Mammary epithelial cell (primary cell): ENCODE measurements at regions of chr10 and their contacts with region 1.

Region 1: DNA sequence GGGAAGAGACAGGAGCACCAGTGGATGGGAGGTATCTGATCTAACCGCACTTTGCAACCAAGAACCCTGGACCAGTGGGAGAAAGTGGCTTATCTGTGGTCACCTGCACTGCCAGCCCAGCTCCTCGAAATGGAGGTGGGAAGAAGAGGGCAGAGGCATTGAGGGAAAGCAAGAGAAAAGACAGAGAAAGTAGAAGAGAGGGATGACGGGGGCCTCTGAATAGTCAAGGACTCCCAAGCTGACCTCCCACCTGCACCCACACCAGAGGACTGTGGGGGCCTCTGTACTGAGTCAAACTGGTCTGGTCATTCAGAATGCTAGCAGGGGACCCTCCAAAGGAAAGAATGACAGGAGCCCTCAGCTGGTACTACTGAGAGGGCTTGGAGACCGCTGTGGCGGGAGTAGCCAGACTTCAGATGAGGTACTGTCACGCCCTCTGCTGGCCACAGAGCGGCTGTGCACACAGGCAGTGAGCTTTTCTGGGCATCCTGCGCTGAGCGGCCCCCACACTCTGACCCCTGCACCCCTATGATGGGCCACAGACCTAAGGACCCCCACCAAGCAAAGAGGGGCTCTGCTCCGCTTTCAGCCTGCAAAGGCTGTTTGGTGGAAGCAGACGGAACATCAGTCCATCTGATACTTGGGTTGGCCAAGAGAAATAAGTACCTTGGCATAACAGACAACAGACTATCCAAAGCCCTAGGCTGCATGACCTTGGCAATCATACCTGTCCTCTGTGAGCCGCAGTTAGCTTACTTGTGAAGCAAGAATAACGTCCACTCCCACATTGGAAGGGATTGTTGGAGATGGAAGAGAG is 112.9 kb downstream of the COL13A1 start:
- DNase-seq: peak; percentile 31
- H3K4me3 ChIP-seq: no peak overlapping the region
- H3K27ac ChIP-seq: no peak overlapping the region
- H3K4me1 ChIP-seq: no peaks in the 10 kb centered on the region
- H3K27me3 ChIP-seq: no peaks in the 10 kb centered on the region
- CTCF ChIP-seq: peak; percentile 91 to 95

Region 2: DNA sequence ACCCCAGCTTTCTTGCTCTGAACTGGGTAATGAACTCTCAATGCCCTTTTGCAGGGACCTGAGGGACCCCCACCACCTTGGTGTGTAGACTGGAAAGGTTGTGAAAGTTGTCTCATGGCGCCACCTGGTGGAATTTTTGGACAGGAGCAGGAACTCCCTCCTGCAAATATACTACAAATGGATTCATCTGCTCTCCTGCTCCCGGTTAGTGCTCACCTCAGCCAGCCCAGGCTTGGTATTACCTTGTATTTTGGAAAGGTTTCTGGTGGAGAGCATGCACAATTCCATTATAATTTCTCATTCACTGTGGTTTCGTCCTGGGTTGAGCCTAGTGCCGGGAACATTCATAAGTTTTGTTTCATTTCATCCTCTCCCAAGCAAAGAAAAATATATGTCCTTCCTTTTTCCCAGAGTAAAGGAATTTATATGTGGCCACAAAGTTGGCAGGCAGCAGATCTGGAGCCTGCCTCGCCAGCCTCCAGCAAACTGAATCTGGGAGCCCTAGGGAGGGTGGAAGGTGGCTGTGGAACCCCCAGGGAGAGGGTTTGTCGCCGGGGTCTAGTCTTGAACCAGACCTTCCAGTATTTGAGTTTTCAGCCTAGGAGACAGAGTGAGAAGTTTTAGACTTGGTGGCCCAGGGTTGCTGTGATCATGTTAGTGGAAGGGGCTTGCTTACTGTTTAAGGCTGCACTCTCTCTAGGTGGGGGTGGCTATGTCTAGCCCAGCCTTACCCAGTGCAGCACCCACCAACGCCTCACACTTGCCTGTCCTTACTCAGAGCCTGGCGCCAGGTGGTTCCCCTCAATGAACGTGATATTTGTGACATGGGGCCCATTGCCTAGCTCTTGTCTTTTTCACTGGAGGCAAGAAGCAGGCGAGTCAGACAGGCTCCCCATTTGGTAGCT is 275.1 kb before region 1 on chr10:
- CTCF ChIA-PET with region 1: no interaction called
- dilution Hi-C with region 1: loop called (anchors 5 kb)
- in situ Hi-C with region 1: no loop called
- intact Hi-C with region 1: loop called (anchors 1 kb)
- DNase-seq: peak; percentile 57
- H3K4me3 ChIP-seq: no peak overlapping the region
- H3K27ac ChIP-seq: peak overlapping the region; percentile 38
- H3K4me1 ChIP-seq: peaks cover 29% of the 10 kb centered on the region
- H3K27me3 ChIP-seq: no peaks in the 10 kb centered on the region
- CTCF ChIP-seq: peak; percentile 81 to 90

Region 3: GRCh38 chr10:69696073-69696731 is 218.4 kb before region 1 on chr10:
- CTCF ChIA-PET with region 1: no interaction called
- dilution Hi-C with region 1: no loop called
- in situ Hi-C with region 1: no loop called
- intact Hi-C with region 1: loop called (anchors 1 kb)
- DNase-seq: peak; percentile 87
- H3K4me3 ChIP-seq: no peak overlapping the region
- H3K27ac ChIP-seq: peak overlapping the region; percentile 49
- H3K4me1 ChIP-seq: no peaks in the 10 kb centered on the region
- H3K27me3 ChIP-seq: peaks cover 4% of the 10 kb centered on the region
- CTCF ChIP-seq: peak; percentile 69 to 72

Region 4: DNA sequence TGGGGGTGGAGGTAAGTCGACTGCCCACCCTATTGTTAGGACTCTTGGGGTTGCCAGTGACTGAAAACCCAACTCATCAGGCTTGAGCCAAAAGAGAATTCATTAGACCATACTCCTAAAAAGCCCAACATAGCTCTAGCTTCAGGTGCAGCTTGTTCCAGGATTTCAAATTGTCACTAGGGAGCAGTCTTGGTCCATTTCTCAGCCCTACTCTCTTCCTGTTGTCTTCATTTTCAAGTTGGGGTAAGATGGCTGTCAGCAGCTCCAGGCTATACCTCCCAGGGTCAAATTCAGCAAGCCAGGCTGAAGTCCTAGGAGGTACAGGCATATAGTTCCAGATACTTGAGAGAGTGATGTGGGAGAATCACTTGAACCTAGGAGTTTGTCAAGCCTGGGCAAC is 127.8 kb before region 1 on chr10:
- CTCF ChIA-PET with region 1: interaction called, 22 read pairs
- dilution Hi-C with region 1: loop called (anchors 5 kb)
- in situ Hi-C with region 1: loop called (anchors 10 kb)
- intact Hi-C with region 1: loop called (anchors 1 kb)
- DNase-seq: peak; percentile 35
- H3K4me3 ChIP-seq: no peak overlapping the region
- H3K27ac ChIP-seq: no peak overlapping the region
- H3K4me1 ChIP-seq: no peaks in the 10 kb centered on the region
- H3K27me3 ChIP-seq: no peaks in the 10 kb centered on the region
- CTCF ChIP-seq: peak; percentile 35 to 47

Region 5: GRCh38 chr10:69800109-69800508 is 114.5 kb before region 1 on chr10:
- CTCF ChIA-PET with region 1: no interaction called
- dilution Hi-C with region 1: no loop called
- in situ Hi-C with region 1: loop called in 1 of 2 experiments (anchors 10 kb)
- intact Hi-C with region 1: loop called (anchors 1 kb)
- DNase-seq: peak; percentile 48
- H3K4me3 ChIP-seq: no peak overlapping the region
- H3K27ac ChIP-seq: no peak overlapping the region
- H3K4me1 ChIP-seq: peaks cover 35% of the 10 kb centered on the region
- H3K27me3 ChIP-seq: no peaks in the 10 kb centered on the region
- CTCF ChIP-seq: peak; percentile 80 to 86

Region 6: GRCh38 chr10:69883310-69884023 is 31.1 kb before region 1 on chr10:
- CTCF ChIA-PET with region 1: interaction called, 7 read pairs
- dilution Hi-C with region 1: no loop called
- in situ Hi-C with region 1: no loop called
- intact Hi-C with region 1: loop called (anchors 1 kb)
- DNase-seq: peak; percentile 27
- H3K4me3 ChIP-seq: no peak overlapping the region
- H3K27ac ChIP-seq: no peak overlapping the region
- H3K4me1 ChIP-seq: no peaks in the 10 kb centered on the region
- H3K27me3 ChIP-seq: no peaks in the 10 kb centered on the region
- CTCF ChIP-seq: peak; percentile 50 to 74

Region 7: DNA sequence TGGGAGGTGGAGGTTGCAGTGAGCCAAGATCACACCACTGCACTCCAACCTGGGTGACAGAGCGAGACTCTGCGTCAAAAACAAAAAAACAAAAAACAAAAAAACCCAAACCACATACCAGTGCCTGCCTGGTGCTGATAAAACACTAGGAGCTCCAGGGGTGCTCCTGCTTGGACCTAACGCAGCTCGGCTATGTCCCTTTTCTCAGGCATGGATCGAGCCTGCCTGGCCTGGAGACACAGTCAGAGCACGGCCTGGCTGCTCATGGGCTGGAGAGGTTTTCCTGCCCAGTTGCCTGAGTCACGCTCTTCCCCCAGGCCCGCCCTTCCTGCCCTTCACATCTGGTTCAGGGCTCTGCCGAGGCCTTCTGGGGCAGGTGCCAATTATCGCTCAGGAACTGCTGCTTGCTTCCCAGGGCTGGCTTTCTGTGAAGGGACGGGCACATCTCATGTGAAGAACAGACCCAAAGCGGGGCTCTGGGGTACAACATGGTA is 381.8 kb after region 1 on chr10:
- CTCF ChIA-PET with region 1: no interaction called
- dilution Hi-C with region 1: no loop called
- in situ Hi-C with region 1: no loop called
- intact Hi-C with region 1: no loop called
- DNase-seq: peak; percentile 73
- H3K4me3 ChIP-seq: no peak overlapping the region
- H3K27ac ChIP-seq: no peak overlapping the region
- H3K4me1 ChIP-seq: peaks cover 15% of the 10 kb centered on the region
- H3K27me3 ChIP-seq: no peaks in the 10 kb centered on the region
- CTCF ChIP-seq: no peak